Activated T-helper 1 cell treated with anti-CD3 and anti-CD28 coated beads, Interleukin-12 subunit alpha, Interleukin-12 subunit beta, Interleukin-2, Interleukin-4 antibody, amounts not matched to agents 30 ng/mL and 10 ng/mL and 1 ng/mL, durations not matched to agents 14 hours and 24 hours and 36 hours (primary cell): ENCODE measurements at regions of chrX and their contacts with region 1.

Region 1: DNA sequence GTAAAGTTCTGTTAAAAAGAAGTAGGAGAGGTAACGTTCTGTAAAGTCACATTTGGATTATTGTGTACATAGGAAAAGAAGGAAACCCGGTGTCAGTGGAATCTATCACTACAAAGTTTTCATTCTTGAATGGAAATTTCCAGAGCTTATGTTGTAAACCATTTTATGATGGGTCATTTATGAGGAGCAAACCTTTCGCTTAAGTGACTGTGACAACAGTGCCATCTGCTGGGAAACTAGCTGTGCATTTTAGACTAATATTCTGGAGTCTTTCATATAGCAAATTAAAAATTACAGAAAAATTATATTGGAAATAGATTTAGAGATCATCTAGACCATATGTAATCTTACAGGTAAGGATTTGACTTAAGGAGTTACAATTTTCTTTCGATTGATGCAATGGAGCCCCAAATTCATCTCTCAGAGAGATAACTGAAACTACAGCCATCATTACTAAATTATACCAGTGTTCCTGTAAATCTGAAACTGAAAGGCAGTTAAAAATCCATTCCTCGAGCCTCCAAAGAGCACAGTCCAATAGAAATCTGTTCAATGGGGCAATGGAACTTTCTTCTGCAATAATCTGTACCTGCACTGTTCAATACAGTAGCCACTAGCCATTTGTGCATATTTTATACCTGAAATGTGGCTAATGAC is 26.9 kb downstream of the ASB9 start:
- DNase-seq: no peak
- H3K4me3 Mint-ChIP-seq: no peak overlapping the region
- H3K27ac Mint-ChIP-seq: no peak overlapping the region
- H3K4me1 Mint-ChIP-seq: no peaks in the 10 kb centered on the region
- H3K27me3 Mint-ChIP-seq: no peaks in the 10 kb centered on the region

Region 2: DNA sequence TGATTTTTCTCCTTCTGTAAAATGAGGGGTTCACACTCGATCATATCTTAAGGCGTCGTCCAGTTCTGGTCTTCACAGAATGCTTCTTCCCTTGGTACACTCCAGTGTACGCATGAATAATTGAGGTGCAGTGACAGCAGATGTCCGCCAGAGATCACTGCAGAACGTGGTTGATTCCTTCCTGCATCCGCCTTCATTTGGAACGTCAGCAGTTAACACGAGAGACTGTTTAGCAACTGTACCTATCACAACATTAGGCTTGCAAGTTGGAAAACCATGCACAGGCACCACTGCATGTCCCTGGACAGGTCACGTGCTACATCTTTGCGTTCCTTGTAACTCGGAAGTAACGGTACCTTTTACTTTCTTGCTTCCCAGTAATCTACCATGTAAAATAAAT is 1147.3 kb before region 1 on chrX:
- intact Hi-C with region 1: loop called (anchors 1 kb)
- DNase-seq: peak; percentile 6
- H3K4me3 Mint-ChIP-seq: no peak overlapping the region
- H3K27ac Mint-ChIP-seq: no peak overlapping the region
- H3K4me1 Mint-ChIP-seq: no peaks in the 10 kb centered on the region
- H3K27me3 Mint-ChIP-seq: peaks cover 4% of the 10 kb centered on the region

Region 3: GRCh38 chrX:15107367-15107988 is 135.5 kb before region 1 on chrX:
- intact Hi-C with region 1: loop called (anchors 1 kb)
- DNase-seq: no peak
- H3K4me3 Mint-ChIP-seq: no peak overlapping the region
- H3K27ac Mint-ChIP-seq: no peak overlapping the region
- H3K4me1 Mint-ChIP-seq: peaks cover 15% of the 10 kb centered on the region
- H3K27me3 Mint-ChIP-seq: peaks cover 5% of the 10 kb centered on the region

Region 4: DNA sequence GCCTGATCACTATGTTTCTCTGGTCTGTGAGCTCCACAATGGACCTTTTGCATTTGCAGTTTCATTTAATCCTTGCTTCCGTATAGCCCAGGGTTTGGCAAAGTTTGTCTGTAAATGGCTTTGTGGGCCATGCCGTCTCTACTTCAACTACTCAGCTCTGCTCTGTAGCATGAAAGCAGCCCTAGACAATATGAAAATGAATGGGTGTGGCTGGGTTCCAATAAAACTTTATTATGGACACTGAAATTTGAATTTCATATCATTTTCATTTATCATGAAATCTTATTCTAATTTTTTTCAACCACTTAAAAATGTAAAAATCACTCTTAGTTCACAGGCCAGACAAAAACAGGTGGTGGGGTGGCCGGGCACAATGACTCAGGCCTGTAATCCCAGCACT is 316.2 kb after region 1 on chrX:
- intact Hi-C with region 1: no loop called
- DNase-seq: no peak
- H3K4me3 Mint-ChIP-seq: no peak overlapping the region
- H3K27ac Mint-ChIP-seq: no peak overlapping the region
- H3K4me1 Mint-ChIP-seq: no peaks in the 10 kb centered on the region
- H3K27me3 Mint-ChIP-seq: peaks cover 2% of the 10 kb centered on the region